ENCODE measurements at regions of chr7 and their contacts with region 1.

Region 1: DNA sequence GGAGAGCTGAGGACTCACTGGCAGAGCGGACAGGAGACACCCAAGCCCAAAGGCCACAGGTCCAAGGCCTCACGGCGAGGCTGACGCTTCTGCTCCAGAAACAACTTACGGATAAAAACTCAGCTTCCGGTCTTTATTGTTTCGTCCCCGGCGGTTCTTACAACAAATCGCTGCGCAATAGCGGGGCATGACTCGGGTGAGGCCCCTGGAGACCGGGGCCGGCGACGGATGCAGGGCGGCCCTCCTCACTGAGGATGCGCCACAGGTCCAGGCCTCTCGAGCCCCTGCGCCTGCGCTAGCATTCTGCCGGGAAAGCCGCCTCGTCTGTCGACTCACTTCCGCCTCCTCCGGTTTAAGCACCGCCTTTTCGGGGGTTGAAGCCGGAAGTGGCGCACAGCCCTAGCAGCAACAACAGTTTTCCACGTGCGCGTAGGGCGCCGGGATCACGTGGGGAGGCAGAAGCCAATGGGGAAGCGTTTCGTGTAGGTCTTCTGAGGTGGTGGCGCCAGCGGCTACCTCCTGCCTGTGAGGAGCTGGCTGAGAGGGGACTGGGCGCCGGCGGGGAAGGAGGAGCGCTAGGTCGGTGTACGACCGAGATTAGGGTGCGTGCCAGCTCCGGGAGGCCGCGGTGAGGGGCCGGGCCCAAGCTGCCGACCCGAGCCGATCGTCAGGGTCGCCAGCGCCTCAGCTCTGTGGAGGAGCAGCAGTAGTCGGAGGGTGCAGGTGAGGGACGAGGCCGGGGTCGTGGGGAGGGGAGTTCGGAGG is at the starts of genes DNAJB9 and THAP5:
- DNase-seq: peak; percentile 99
- ATAC-seq: peak; percentile 97 to 100 (median 98)
- H3K4me3 ChIP-seq: peak within 1 kb of the TSS; percentile 53 to 97 (median 86)
- H3K27ac ChIP-seq: peak within 1 kb of the TSS; percentile 86 to 99 (median 97)
- H3K4me1 ChIP-seq: peaks cover 0 to 70% (median 52%) of the 10 kb centered on the region in 9 donors
- H3K27me3 ChIP-seq: no peaks in the 10 kb centered on the region
- CTCF ChIP-seq: peak in 1 of 9 donors; percentile 19
- total RNA-seq, gene DNAJB9: 33.9 to 57.1 (median 45.4) TPM
- total RNA-seq, gene THAP5: 24.2 to 32.9 (median 28.9) TPM

Region 2: DNA sequence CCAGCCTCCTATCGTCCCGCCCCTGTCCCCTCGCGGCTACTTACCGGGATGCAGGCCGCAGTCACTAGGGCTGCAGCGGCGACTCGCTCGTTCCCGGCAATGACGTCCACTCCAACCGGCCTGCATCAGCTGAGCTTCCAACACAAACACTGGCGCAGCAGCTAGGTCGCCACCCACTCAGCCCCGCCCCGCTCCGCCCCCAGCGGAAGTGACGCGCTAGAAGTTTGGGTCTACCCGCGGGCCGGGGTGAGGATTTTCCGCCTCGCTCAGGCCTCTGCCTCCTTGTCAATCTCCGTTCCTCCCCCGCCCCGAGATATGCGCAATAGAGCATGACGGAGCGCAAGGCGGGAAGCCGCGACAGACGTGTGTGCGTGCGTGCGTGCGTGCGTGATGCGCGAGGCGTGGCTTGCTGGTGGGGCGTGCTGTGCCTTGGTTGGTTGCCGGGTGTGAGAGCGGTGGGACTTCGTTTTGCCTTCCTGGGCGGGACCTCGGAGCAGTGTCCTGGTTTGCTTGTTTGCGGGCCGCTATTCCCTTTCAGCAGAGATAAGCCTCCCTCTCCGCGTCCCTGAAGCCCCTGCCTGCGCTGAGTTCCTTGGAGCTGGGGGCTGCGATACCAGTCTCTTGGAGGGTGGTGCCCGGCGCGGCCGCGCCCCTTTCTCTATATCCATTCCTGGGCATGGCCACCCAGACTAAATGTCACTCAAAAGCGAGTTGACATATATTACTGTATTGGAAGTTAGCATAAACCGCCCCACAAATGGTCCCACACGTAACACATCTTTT is 43.4 kb before region 1 on chr7 and contains the start of gene PNPLA8:
- intact Hi-C with region 1: loop called in 8 of 10 experiments (anchors 1 to 5 kb)
- DNase-seq: peak; percentile 100
- ATAC-seq: peak; percentile 95 to 98 (median 96)
- H3K4me3 ChIP-seq: peak within 1 kb of the TSS; percentile 62 to 80 (median 77)
- H3K27ac ChIP-seq: peak within 1 kb of the TSS; percentile 85 to 99 (median 96)
- H3K4me1 ChIP-seq: peaks cover 7 to 46% (median 32%) of the 10 kb centered on the region in 9 donors
- H3K27me3 ChIP-seq: no peaks in the 10 kb centered on the region
- CTCF ChIP-seq: peak in 2 of 9 donors; percentile 13 to 16
- total RNA-seq, gene PNPLA8: 26.9 to 39.9 (median 36.1) TPM

Measured in heart right ventricle (tissue), 16 donors.